K562 (cell line): ENCODE measurements at regions of chr1 and their contacts with region 1.

Region 1: DNA sequence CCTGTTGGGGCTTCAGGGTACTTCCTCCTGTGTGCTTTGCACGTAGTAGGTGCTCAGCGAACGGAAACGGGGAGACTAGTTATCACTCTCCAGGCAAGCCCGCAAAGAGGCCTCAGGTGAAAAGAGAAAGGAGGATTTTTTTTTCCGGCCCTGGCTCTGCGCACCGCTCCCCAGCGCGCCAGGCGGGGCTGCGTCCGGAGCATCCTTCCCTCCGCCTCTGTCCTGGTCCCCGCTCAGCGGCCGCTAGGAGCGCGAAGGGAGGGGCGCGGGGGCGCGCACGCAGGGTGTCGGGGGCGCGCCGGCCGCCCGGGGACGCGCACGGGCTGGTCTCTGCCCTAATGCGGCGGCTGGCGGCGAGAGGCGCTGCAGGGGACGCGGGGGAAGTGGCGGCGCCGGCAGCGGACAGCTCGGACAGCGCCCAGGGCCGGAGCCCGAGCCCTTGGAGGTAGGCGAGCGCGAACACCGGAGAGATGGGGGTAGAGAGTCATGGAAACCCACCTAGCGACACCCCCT is 42.3 kb upstream of the NFASC start:
- DNase-seq: peak; percentile 69 to 93 (median 85)
- ATAC-seq: peak; percentile 93
- H3K4me3 ChIP-seq: no peak overlapping the region
- H3K27ac ChIP-seq: no peak overlapping the region
- H3K4me1 ChIP-seq: peaks cover 0 to 8% of the 10 kb centered on the region in 2 experiments; a peak in 2 of 5 replicates
- H3K27me3 ChIP-seq: peaks cover 18 to 34% of the 10 kb centered on the region in 2 experiments
- CTCF ChIP-seq: peak in 1 of 3 experiments; percentile 16; a peak in 1 of 6 replicates
- EP300 ChIP-seq: no peak
- POLR2A ChIP-seq: no peak
- RAD21 ChIP-seq: no peak

Region 2: GRCh38 chr1:204692325-204692840 is 136.0 kb before region 1 on chr1:
- CTCF ChIA-PET with region 1: no interaction called
- POLR2A ChIA-PET with region 1: no interaction called
- in situ Hi-C with region 1: no loop called
- intact Hi-C with region 1: no loop called
- DNase-seq: peak in 1 of 4 experiments; percentile 38
- ATAC-seq: peak; percentile 68
- H3K4me3 ChIP-seq: no peak overlapping the region
- H3K27ac ChIP-seq: peak overlapping the region; percentile 64
- H3K4me1 ChIP-seq: peaks cover 20 to 42% of the 10 kb centered on the region in 2 experiments
- H3K27me3 ChIP-seq: no peaks in the 10 kb centered on the region
- CTCF ChIP-seq: peak; percentile 38 to 61 (median 53); a peak in 5 of 6 replicates
- EP300 ChIP-seq: no peak
- POLR2A ChIP-seq: no peak
- RAD21 ChIP-seq: peak in 1 of 2 experiments; percentile 20; a peak in 1 of 4 replicates

Region 3: DNA sequence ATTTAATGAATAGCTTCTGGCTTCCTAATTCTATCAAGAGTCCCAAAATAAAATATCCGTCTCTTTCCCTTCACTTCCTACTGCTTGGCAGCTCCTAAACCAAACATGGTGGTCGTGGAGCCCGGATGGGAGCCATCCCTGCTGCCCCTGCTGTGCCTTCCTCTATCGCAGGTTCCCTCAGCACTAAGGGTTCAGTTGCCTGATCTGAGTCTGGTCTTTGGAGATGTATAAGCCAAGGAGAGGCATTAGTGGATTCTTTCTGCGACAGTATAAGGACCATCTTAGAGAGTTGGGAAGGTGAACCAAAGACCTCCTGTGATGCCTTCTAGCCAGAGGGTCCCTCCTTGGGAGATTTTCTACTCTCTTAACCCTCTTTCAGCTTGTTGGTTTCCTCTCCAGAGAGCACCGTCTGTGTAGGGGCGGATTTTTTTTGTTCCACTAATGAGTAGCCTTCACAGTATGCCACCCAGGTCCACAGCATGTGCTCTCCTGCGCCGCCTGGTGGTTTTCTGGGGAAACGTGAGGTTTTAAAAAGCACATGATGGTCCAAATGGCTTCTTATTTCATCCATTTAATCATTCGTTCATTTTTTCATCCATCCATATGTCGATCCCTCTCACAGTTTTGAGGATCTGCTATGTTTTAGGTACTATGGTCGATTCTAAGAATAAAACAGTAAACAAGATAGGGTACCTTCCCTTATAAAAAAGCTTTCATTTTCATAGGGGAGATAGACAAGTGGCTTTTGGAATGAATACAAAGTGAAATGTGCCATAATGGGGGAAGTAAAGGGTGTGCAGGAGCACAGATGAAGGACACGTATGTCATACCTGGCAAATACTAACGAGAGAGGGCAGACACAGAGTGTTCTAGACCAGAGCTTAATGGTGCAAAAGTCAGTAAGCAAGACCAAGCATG is 113.3 kb after region 1 on chr1:
- CTCF ChIA-PET with region 1: interaction called, 3 read pairs
- POLR2A ChIA-PET with region 1: no interaction called
- in situ Hi-C with region 1: no loop called
- intact Hi-C with region 1: loop called (anchors 1 kb)
- DNase-seq: peak; percentile 73 to 77 (median 75)
- ATAC-seq: peak; percentile 93
- H3K4me3 ChIP-seq: no peak overlapping the region
- H3K27ac ChIP-seq: no peak overlapping the region
- H3K4me1 ChIP-seq: no peaks in the 10 kb centered on the region
- H3K27me3 ChIP-seq: peaks cover 10 to 45% of the 10 kb centered on the region in 2 experiments; a peak in 3 of 5 replicates
- CTCF ChIP-seq: peak; percentile 90 to 97 (median 96)
- EP300 ChIP-seq: no peak
- POLR2A ChIP-seq: no peak
- RAD21 ChIP-seq: peak; percentile 79 to 87

Region 4: GRCh38 chr1:204961765-204962419 is 133.5 kb after region 1 on chr1:
- CTCF ChIA-PET with region 1: interaction called, 3 read pairs
- POLR2A ChIA-PET with region 1: no interaction called
- in situ Hi-C with region 1: no loop called
- intact Hi-C with region 1: loop called (anchors 5 kb)
- DNase-seq: no peak
- ATAC-seq: peak; percentile 11; the same call in 1 of the 3 replicates
- H3K4me3 ChIP-seq: no peak overlapping the region
- H3K27ac ChIP-seq: no peak overlapping the region
- H3K4me1 ChIP-seq: peaks cover 0 to 11% of the 10 kb centered on the region in 2 experiments; a peak in 3 of 5 replicates
- H3K27me3 ChIP-seq: peaks cover 24 to 52% of the 10 kb centered on the region in 2 experiments
- CTCF ChIP-seq: peak in 2 of 3 experiments; percentile 42 to 58; a peak in 4 of 6 replicates
- EP300 ChIP-seq: no peak
- POLR2A ChIP-seq: no peak
- RAD21 ChIP-seq: peak; percentile 61 to 67